MCF 10A (cell line): ENCODE measurements at regions of chr12 and their contacts with region 1.

Region 1: GRCh38 chr12:52121824-52122539 is 42.5 kb downstream of the SMIM41 start:
- DNase-seq: peak; percentile 48
- H3K4me3 Mint-ChIP-seq: no peak overlapping the region
- H3K27ac Mint-ChIP-seq: no peak overlapping the region
- H3K4me1 Mint-ChIP-seq: no peaks in the 10 kb centered on the region
- H3K27me3 Mint-ChIP-seq: no peaks in the 10 kb centered on the region
- CTCF ChIP-seq: peak; percentile 77

Region 2: GRCh38 chr12:52132754-52133161 is 10.8 kb after region 1 on chr12:
- CTCF ChIA-PET with region 1: interaction called, 14 read pairs
- POLR2A ChIA-PET with region 1: interaction called, 3 read pairs
- intact Hi-C with region 1: no loop called
- DNase-seq: peak; percentile 92
- H3K4me3 Mint-ChIP-seq: no peak overlapping the region
- H3K27ac Mint-ChIP-seq: peak overlapping the region; percentile 57
- H3K4me1 Mint-ChIP-seq: peaks cover 21% of the 10 kb centered on the region
- H3K27me3 Mint-ChIP-seq: no peaks in the 10 kb centered on the region
- CTCF ChIP-seq: no peak